Activated T-helper 2 cell treated with anti-CD3 and anti-CD28 coated beads, Interferon-gamma antibody, Interleukin-2, Interleukin-4, amounts not matched to agents 10 μg/mL and 5 μg/mL and 100 μg/mL, durations not matched to agents 14 hours and 24 hours and 36 hours (primary cell): ENCODE measurements at regions of chr9 and their contacts with region 1.

Region 1: DNA sequence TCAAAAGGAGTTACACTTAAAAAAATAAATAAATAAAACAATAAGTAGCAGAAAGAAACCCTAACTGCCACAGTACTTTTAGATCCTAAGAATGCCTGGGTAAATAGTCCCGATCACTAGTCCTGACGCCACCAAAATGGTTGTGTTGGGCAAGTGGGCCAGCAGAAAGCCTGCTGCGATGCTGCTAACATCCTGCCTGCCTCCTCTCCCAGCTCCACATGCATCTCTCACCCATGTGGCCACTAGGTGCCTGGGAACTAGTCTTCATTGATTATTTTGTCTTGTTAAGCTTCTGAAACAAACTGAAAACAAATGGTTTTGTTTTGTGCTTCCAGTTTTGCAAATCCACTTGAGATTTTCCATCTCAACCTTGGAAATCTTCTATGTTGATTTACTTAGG is 54.4 kb upstream of the TRAF1 start:
- DNase-seq: no peak
- H3K4me3 Mint-ChIP-seq: no peak overlapping the region
- H3K27ac Mint-ChIP-seq: no peak overlapping the region
- H3K4me1 Mint-ChIP-seq: peaks cover 2% of the 10 kb centered on the region
- H3K27me3 Mint-ChIP-seq: peaks cover 19% of the 10 kb centered on the region

Region 2: DNA sequence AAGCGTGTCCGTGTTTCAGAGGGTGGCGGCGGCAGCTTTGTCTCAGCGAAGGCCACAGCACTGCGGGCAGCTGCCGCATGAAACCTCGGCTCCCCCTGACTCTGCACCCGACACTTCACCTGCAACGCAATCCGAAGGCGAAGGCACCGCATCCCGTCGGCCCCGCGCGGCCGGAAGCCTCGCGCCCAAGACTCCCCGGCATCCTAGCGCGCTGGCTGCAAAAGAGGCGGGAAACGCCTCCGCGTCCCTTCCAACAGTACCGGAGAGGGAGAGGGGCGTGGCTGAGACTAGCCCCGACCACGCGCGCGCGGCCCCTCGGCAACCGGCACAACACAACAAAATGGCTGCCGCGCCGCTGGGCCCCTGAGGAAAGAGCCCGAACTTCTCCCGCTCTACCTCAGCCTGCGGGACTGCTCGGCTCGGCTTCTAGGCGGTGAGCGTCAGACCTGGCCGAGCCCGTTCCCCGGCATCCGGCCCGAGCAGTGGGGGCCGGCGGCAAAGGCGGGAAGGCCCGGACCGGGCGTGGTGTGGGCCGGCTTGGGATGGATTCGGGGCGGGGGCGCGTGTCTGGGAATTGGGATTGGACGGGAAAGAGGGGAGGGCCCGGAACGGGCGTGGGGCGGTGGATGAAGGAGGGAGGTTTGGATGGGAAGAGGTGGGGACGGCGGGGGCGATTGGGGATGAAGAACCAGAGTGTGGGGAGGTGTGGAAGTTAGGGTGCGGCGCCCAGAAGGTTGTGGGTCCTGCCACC is 93.9 kb after region 1 on chr9 and contains the start of gene CNTRL:
- intact Hi-C with region 1: loop called (anchors 1 kb)
- DNase-seq: peak; percentile 90
- H3K4me3 Mint-ChIP-seq: peak within 1 kb of the TSS; percentile 100
- H3K27ac Mint-ChIP-seq: peak within 1 kb of the TSS; percentile 98
- H3K4me1 Mint-ChIP-seq: peaks cover 34% of the 10 kb centered on the region
- H3K27me3 Mint-ChIP-seq: no peaks in the 10 kb centered on the region
- total RNA-seq, gene CNTRL: 67.6 and 68.4 TPM in 2 replicates

Region 3: DNA sequence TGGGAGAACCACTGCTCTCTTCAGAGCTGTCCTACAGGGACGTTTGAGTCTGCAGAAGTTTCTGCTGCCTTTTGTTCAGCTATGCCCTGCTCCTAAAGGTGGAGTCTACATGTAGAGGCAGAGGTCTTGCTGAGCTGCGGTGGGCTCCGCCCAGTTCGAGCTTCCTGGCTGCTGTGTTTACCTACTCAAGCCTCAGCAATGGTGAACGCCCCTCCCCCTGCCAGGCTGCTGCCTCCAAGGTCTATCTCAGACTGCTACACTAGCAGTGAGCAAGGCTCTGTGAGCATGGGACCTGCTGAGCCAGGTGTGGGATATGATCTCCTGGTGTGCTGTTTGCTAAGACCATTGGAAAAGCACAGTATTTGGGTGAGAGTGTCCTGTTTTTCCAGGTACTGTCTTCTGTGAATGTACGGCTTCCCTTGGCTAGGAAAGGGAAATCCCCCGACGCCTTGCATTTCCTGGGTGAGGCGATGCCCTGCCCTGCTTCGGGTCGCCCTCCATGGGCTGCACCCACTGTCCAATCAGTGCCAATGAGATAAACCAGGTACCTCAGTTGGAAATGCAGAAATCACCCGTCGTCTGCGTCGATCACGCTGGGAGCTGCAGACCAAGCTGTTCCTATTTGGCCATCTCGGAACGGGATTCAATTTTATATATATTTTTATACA is 152.3 kb after region 1 on chr9:
- intact Hi-C with region 1: no loop called
- DNase-seq: peak; percentile 76
- H3K4me3 Mint-ChIP-seq: peak overlapping the region; percentile 4
- H3K27ac Mint-ChIP-seq: no peak overlapping the region
- H3K4me1 Mint-ChIP-seq: peaks cover 58% of the 10 kb centered on the region
- H3K27me3 Mint-ChIP-seq: no peaks in the 10 kb centered on the region